ENCODE measurements at regions of chr6 and their contacts with region 1.

Region 1: GRCh38 chr6:142845624-142846458 is 99.1 kb downstream of the HIVEP2 start:
- DNase-seq: no peak
- ATAC-seq: peak; percentile 60
- H3K4me3 Mint-ChIP-seq: peak overlapping the region; percentile 78
- H3K27ac Mint-ChIP-seq: peak overlapping the region; percentile 90
- H3K4me1 Mint-ChIP-seq: peaks cover 95% of the 10 kb centered on the region
- H3K27me3 Mint-ChIP-seq: no peaks in the 10 kb centered on the region
- CTCF ChIP-seq: no peak

Region 2: GRCh38 chr6:142802124-142802523 is 43.7 kb before region 1 on chr6:
- CTCF ChIA-PET with region 1: interaction called, 5 read pairs
- POLR2A ChIA-PET with region 1: interaction called, 11 read pairs
- intact Hi-C with region 1: no loop called
- DNase-seq: no peak
- ATAC-seq: peak; percentile 41
- H3K4me3 Mint-ChIP-seq: no peak overlapping the region
- H3K27ac Mint-ChIP-seq: peak overlapping the region; percentile 4
- H3K4me1 Mint-ChIP-seq: peaks cover 55% of the 10 kb centered on the region
- H3K27me3 Mint-ChIP-seq: no peaks in the 10 kb centered on the region
- CTCF ChIP-seq: no peak

Region 3: GRCh38 chr6:142833054-142833453 is 12.8 kb before region 1 on chr6:
- CTCF ChIA-PET with region 1: interaction called, 3 read pairs
- POLR2A ChIA-PET with region 1: interaction called, 5 read pairs
- intact Hi-C with region 1: loop called (anchors 1 kb)
- DNase-seq: no peak
- ATAC-seq: peak; percentile 40
- H3K4me3 Mint-ChIP-seq: no peak overlapping the region
- H3K27ac Mint-ChIP-seq: peak overlapping the region; percentile 46
- H3K4me1 Mint-ChIP-seq: peaks cover 44% of the 10 kb centered on the region
- H3K27me3 Mint-ChIP-seq: no peaks in the 10 kb centered on the region
- CTCF ChIP-seq: no peak

Region 4: DNA sequence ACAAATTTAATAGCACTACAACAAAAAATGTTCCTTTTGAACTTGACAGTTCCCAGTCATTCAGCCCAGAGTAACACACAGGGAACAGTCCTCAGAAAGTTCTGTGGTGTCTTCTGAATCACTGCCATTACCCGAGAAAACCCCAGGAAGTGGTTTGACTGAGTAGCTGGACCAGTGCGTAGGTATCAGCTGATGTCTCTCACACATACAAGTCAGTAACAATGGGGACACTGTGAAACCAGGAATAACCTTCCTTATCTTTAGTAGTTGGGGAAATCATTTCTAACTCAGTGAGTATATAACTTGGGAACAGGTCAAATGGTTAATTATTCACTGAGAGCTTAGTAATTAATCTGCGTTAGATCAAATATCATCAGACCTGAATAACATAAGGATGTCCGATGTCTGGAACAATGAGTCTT is 26.1 kb after region 1 on chr6:
- CTCF ChIA-PET with region 1: no interaction called
- POLR2A ChIA-PET with region 1: no interaction called
- intact Hi-C with region 1: loop called (anchors 1 kb)
- DNase-seq: no peak
- ATAC-seq: peak; percentile 91
- H3K4me3 Mint-ChIP-seq: peak overlapping the region; percentile 49
- H3K27ac Mint-ChIP-seq: peak overlapping the region; percentile 82
- H3K4me1 Mint-ChIP-seq: peaks cover 84% of the 10 kb centered on the region
- H3K27me3 Mint-ChIP-seq: no peaks in the 10 kb centered on the region
- CTCF ChIP-seq: no peak

Measured in activated B cell treated with CpG ODN at 0.5 μM for 24 hours (primary cell).